Caco-2 (cell line): ENCODE measurements at regions of chr11 and their contacts with region 1.

Region 1: DNA sequence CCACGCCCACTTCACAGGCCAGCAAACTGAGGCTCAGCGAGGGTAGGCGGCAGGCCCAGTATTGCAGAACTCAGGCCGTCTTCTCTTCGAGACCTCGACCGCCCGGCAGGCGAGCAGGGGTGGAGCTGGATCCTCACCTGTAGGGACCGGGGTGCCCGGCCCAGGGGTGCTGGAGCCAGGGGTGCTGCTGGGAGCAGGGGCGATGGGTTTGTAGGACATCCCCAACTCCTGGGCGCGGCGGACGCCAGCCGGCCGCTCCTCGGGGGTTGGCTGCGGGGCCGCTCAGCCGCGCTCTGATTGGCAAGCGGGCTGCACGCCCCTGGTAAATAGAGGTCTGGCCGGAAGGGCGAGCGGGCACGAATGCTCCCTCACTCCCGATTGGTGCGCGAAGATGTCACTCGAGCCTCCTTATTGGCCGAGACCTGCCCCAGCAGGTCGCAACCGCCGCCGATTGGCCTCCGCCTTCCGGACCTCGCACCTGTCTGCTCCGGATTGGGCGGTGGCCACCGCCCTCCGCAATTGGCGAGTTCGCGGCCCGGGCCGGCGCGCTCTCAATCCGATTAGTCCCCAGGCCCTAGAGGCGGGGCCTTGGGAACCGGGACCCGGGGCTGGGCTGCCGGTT is at the start of gene CDK2AP2:
- DNase-seq: peak; percentile 100
- H3K4me3 ChIP-seq: peak within 1 kb of the TSS; percentile 74
- H3K4me3 Mint-ChIP-seq: peak within 1 kb of the TSS; percentile 99
- H3K27ac Mint-ChIP-seq: peak within 1 kb of the TSS; percentile 100
- H3K4me1 ChIP-seq: peaks cover 63% of the 10 kb centered on the region
- H3K4me1 Mint-ChIP-seq: peaks cover 52% of the 10 kb centered on the region
- H3K27me3 ChIP-seq: no peaks in the 10 kb centered on the region
- H3K27me3 Mint-ChIP-seq: no peaks in the 10 kb centered on the region
- CTCF ChIP-seq: peak in 1 of 2 experiments; percentile 6
- total RNA-seq, gene CDK2AP2: 96.1 and 99.4 TPM in 2 replicates

Region 2: DNA sequence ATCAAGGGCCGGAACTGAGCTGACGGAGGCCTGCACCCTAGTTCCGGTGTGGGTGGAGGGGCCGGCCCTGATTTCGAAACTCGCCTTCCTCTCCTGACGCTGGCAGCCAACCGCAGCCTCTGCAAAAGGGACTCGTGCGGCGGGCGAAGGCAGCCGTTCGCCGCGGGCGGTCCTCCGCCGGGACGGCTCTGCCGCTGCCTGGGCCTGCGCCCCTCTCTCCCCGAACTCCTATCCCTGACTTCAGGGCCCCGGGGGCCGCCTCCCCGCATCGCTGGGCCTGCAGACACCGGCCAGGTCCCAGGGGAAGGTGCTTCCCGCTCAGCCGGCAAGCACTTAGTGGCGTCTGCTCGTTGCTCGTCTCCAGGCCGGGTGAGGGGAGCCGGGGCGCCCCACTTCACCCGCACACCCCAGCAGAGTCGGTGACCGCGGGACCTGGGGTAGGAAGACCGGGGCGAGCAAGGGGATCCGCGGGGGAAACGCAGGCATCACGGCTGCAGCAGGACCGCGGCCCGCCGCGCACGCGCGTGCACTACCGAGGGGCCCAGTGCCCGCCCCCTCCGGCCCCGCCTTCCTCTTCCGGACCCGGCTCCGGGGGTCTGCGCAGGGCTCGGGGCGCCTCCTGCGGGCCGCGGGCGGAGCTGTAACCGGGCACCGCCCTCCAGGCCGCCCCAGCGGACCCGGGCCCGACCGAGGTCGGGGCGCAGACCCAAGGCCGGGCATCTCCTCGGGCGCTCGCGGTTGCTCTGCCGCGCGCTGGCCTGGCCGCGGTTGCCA is 219.3 kb before region 1 on chr11:
- CTCF ChIA-PET with region 1: no interaction called
- POLR2A ChIA-PET with region 1: no interaction called
- intact Hi-C with region 1: no loop called
- DNase-seq: peak; percentile 94 to 95
- H3K4me3 ChIP-seq: peak overlapping the region; percentile 91
- H3K4me3 Mint-ChIP-seq: peak overlapping the region; percentile 99
- H3K27ac Mint-ChIP-seq: peak overlapping the region; percentile 90
- H3K4me1 ChIP-seq: peaks cover 20% of the 10 kb centered on the region
- H3K4me1 Mint-ChIP-seq: peaks cover 29% of the 10 kb centered on the region
- H3K27me3 ChIP-seq: no peaks in the 10 kb centered on the region
- H3K27me3 Mint-ChIP-seq: no peaks in the 10 kb centered on the region
- CTCF ChIP-seq: peak; percentile 51 to 56

Region 3: DNA sequence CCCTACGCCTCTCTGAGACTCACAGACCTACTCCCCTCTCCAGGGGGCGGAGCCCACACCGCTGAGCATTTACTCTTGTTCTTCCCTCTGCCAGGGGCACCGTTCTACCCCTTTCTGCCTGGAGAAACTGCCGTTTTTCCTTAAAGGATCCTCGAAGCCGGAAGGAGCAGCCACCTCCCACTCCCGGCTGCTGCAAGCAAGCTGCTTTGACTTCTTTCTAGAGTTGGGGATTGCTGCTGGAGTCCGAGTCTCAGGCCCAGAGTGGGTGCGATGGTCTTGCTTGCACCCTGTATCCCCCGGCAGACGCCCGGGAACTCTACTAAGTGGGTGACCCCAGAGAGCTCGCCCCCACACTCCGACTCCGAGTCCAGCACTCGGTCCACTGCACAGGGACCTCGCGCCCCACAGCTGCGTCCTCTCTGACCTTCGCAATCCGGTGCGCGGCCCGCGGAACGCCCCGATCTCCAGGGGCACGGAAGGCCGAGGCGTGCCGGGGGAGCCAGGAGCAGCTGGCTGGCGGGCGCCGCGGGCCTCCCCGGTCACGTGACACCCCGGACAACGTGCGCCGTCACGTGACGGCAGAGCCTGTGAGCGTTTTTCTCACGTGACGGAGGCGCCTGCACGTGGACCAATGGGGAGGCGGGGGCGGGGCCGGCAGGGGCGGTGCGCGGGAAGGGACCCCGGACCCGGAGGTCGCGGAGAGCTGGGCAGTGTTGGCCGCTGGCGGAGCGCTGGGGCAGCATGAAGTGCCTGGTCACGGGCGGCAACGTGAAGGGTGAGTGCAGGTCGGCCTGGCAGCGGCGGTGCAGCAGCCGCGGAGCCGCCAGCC is 116.5 kb before region 1 on chr11 and contains the start of gene RAD9A:
- CTCF ChIA-PET with region 1: no interaction called
- POLR2A ChIA-PET with region 1: no interaction called
- intact Hi-C with region 1: loop called (anchors 5 kb)
- DNase-seq: peak; percentile 98 to 99
- H3K4me3 ChIP-seq: peak within 1 kb of the TSS; percentile 80
- H3K4me3 Mint-ChIP-seq: peak within 1 kb of the TSS; percentile 76
- H3K27ac Mint-ChIP-seq: peak within 1 kb of the TSS; percentile 63
- H3K4me1 ChIP-seq: peaks cover 5% of the 10 kb centered on the region; the same call in 1 of the 2 replicates
- H3K4me1 Mint-ChIP-seq: peaks cover 23% of the 10 kb centered on the region
- H3K27me3 ChIP-seq: no peaks in the 10 kb centered on the region
- H3K27me3 Mint-ChIP-seq: no peaks in the 10 kb centered on the region
- CTCF ChIP-seq: no peak
- total RNA-seq, gene RAD9A: 55.1 and 63.5 TPM in 2 replicates

Region 4: GRCh38 chr11:67468835-67469811 is 38.9 kb before region 1 on chr11 and contains the start of gene TMEM134:
- CTCF ChIA-PET with region 1: no interaction called
- POLR2A ChIA-PET with region 1: no interaction called
- intact Hi-C with region 1: loop called (anchors 1 kb)
- DNase-seq: peak; percentile 96 to 98
- H3K4me3 ChIP-seq: peak within 1 kb of the TSS; percentile 69
- H3K4me3 Mint-ChIP-seq: peak within 1 kb of the TSS; percentile 94
- H3K27ac Mint-ChIP-seq: peak within 1 kb of the TSS; percentile 89
- H3K4me1 ChIP-seq: peaks cover 23% of the 10 kb centered on the region
- H3K4me1 Mint-ChIP-seq: peaks cover 20% of the 10 kb centered on the region
- H3K27me3 ChIP-seq: no peaks in the 10 kb centered on the region
- H3K27me3 Mint-ChIP-seq: no peaks in the 10 kb centered on the region
- CTCF ChIP-seq: peak; percentile 54 to 85
- total RNA-seq, gene TMEM134: 47.9 and 52.2 TPM in 2 replicates

Region 5: DNA sequence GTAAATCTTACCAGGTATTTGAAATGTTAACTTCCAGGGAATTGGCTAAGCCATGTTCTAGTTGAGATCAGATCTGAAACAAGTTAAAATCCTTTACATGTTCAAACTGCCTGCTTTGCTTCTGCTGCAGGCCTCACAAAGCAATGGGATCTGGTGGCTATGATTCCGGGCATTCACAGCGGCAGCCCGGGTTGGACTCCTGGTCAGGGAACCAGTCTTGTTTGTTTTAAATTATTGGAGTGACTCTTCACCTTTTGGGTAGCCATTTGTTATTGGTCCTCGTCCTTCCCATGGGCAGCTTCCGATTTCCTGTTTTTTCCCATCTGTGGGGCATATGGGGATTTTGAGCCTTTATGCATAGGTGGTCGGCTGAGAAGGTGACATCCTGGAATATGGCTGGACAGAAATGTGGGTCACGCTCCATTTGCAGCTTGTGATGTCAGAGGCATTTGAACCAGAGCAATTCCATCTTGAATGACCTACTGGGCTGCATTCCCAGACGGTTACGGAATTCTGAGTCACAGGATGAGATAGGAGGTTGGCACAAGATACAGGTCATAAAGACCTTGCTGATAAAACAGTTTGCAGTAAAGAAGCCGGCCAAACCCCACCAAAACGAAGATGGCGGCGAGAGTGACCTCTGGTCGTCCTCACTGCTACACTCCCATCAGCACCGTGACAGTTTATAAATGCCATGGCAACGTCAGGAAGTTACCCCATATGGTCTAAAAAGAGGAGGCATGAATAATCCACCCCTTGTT is 55.6 kb after region 1 on chr11:
- CTCF ChIA-PET with region 1: no interaction called
- POLR2A ChIA-PET with region 1: no interaction called
- intact Hi-C with region 1: loop called (anchors 1 kb)
- DNase-seq: peak; percentile 89 to 96
- H3K4me3 ChIP-seq: no peak overlapping the region
- H3K4me3 Mint-ChIP-seq: peak overlapping the region; percentile 59
- H3K27ac Mint-ChIP-seq: peak overlapping the region; percentile 95
- H3K4me1 ChIP-seq: peaks cover 33% of the 10 kb centered on the region
- H3K4me1 Mint-ChIP-seq: peaks cover 32% of the 10 kb centered on the region
- H3K27me3 ChIP-seq: no peaks in the 10 kb centered on the region
- H3K27me3 Mint-ChIP-seq: no peaks in the 10 kb centered on the region
- CTCF ChIP-seq: no peak

Region 6: GRCh38 chr11:67606492-67607201 is 98.7 kb after region 1 on chr11 and contains the start of gene NDUFV1:
- CTCF ChIA-PET with region 1: no interaction called
- POLR2A ChIA-PET with region 1: no interaction called
- intact Hi-C with region 1: loop called (anchors 1 kb)
- DNase-seq: peak; percentile 98 to 100
- H3K4me3 ChIP-seq: peak within 1 kb of the TSS; percentile 80
- H3K4me3 Mint-ChIP-seq: peak within 1 kb of the TSS; percentile 82
- H3K27ac Mint-ChIP-seq: peak within 1 kb of the TSS; percentile 91
- H3K4me1 ChIP-seq: peaks cover 10% of the 10 kb centered on the region; the same call in 1 of the 2 replicates
- H3K4me1 Mint-ChIP-seq: no peaks in the 10 kb centered on the region
- H3K27me3 ChIP-seq: no peaks in the 10 kb centered on the region
- H3K27me3 Mint-ChIP-seq: no peaks in the 10 kb centered on the region
- CTCF ChIP-seq: peak; percentile 86 to 88
- total RNA-seq, gene NDUFV1: 358 and 375 TPM in 2 replicates